T-cell (primary cell): ENCODE measurements at regions of chr1 and their contacts with region 1.

Region 1: GRCh38 chr1:214271174-214271858 is 9.6 kb upstream of the SMYD2 start:
- DNase-seq: peak in 1 of 35 experiments; percentile 25
- ATAC-seq: no peak
- H3K4me3 ChIP-seq: no peak overlapping the region
- H3K4me3 Mint-ChIP-seq: no peak overlapping the region
- H3K27ac ChIP-seq: no peak overlapping the region
- H3K27ac Mint-ChIP-seq: no peak overlapping the region
- H3K4me1 ChIP-seq: no peaks in the 10 kb centered on the region
- H3K4me1 Mint-ChIP-seq: peaks cover 0 to 4% (median 2%) of the 10 kb centered on the region in 3 donors
- H3K27me3 ChIP-seq: peaks cover 0 to 11% of the 10 kb centered on the region in 2 experiments
- H3K27me3 Mint-ChIP-seq: peaks cover 10 to 13% of the 10 kb centered on the region in 2 donors

Region 2: GRCh38 chr1:214248311-214249085 is 22.8 kb before region 1 on chr1:
- CTCF ChIA-PET with region 1: no interaction called
- POLR2A ChIA-PET with region 1: no interaction called
- DNase-seq: no peak
- ATAC-seq: no peak
- H3K4me3 ChIP-seq: no peak overlapping the region
- H3K4me3 Mint-ChIP-seq: no peak overlapping the region
- H3K27ac ChIP-seq: no peak overlapping the region
- H3K27ac Mint-ChIP-seq: no peak overlapping the region
- H3K4me1 ChIP-seq: no peaks in the 10 kb centered on the region
- H3K4me1 Mint-ChIP-seq: peaks cover 0 to 10% (median 8%) of the 10 kb centered on the region in 3 donors
- H3K27me3 ChIP-seq: no peaks in the 10 kb centered on the region
- H3K27me3 Mint-ChIP-seq: peaks cover 26 to 27% of the 10 kb centered on the region in 2 donors

Region 3: DNA sequence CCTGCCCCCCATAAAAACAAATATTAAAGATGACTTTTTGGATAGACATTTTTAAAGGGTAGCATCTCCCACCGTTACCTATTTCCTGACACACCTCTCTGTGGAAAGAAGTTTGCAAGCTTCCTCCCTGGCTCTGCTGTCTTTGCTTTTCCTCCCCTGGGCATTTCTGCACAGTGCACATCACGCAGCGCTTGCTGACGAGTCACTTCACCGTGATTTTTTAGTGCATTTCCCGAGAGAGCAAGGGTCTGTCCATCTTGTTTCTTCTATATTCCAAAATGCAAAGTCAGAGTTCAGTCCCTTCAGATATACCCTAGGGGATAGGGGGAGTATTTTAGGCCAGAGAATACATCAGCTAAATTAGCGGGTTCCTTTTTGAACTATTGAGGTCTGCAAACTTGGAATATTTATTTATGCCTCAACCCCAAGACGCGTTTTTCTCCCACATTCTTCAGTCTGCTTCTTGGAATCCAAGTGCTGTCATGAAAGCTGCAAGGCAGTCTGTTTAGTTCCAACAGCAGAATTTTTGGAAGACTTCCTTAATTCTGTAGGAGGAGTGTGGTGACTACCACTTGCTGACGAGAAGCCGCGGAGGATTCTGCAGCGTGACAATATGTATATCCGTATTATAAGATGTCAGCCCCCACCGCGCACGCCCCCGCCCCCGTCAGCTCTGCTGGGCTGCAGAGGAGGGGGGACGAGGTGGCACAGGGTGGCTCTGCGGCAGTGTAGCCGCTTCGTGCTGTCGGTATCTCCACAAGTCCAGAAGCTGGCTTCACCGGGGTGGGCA is 32.0 kb after region 1 on chr1:
- CTCF ChIA-PET with region 1: interaction called in 1 of 2 experiments, 11 read pairs
- POLR2A ChIA-PET with region 1: no interaction called
- DNase-seq: no peak
- ATAC-seq: no peak
- H3K4me3 ChIP-seq: no peak overlapping the region
- H3K4me3 Mint-ChIP-seq: no peak overlapping the region
- H3K27ac ChIP-seq: no peak overlapping the region
- H3K27ac Mint-ChIP-seq: no peak overlapping the region
- H3K4me1 ChIP-seq: peaks cover 3% of the 10 kb centered on the region in 2 experiments
- H3K4me1 Mint-ChIP-seq: peaks cover 34 to 51% (median 42%) of the 10 kb centered on the region in 3 donors
- H3K27me3 ChIP-seq: no peaks in the 10 kb centered on the region
- H3K27me3 Mint-ChIP-seq: no peaks in the 10 kb centered on the region